Mammary epithelial cell (primary cell): ENCODE measurements at regions of chr12 and their contacts with region 1.

Region 1: DNA sequence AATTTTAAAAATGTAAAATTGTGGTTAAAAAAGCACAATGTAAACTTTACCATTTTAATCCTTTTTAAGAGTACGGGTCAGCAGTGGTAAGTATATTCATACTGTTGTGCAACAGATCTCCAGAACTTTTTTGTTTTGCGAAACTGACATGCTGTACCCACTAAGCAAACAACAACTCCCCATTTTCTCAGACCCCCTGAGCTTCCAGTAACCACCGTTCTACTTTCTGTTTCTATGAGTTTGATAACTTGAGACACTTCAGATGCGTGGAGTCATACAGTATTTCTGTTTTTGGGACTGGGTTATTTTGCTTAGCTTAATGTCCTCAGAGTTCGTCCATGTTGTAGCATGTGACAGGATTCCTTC is 38.0 kb downstream of the CHST11 start:
- DNase-seq: no peak
- H3K4me3 ChIP-seq: no peak overlapping the region
- H3K27ac ChIP-seq: no peak overlapping the region
- H3K4me1 ChIP-seq: no peaks in the 10 kb centered on the region
- H3K27me3 ChIP-seq: no peaks in the 10 kb centered on the region
- CTCF ChIP-seq: no peak

Region 2: GRCh38 chr12:104582739-104583138 is 88.0 kb after region 1 on chr12:
- CTCF ChIA-PET with region 1: no interaction called
- dilution Hi-C with region 1: loop called (anchors 5 kb)
- in situ Hi-C with region 1: no loop called
- intact Hi-C with region 1: no loop called
- DNase-seq: no peak
- H3K4me3 ChIP-seq: no peak overlapping the region
- H3K27ac ChIP-seq: no peak overlapping the region
- H3K4me1 ChIP-seq: peaks cover 20% of the 10 kb centered on the region
- H3K27me3 ChIP-seq: no peaks in the 10 kb centered on the region
- CTCF ChIP-seq: no peak

Region 3: DNA sequence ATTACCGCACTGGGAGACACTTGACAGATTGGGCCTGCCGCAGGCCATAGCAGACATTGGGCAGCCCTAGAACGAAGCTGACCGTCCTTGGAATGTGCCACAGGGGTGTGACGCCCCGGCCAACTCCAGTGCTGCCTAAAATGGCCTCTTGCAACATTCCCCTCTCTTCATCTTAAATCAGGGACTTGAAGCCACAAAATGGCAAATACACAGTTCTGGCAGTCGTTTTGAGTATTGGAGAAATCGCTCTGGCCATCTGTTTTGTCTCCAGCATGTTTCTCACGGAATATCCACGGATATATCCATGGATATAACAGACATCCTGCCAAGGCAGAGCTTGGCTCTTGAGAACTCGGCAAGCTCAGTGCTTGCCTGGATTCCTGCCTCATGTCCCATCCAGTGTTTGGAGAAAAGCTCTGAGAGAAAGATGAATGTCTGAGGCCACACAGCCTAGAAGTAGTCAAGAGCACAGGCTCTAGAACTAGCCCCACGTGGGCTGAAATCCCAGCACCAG is 120.3 kb after region 1 on chr12:
- CTCF ChIA-PET with region 1: no interaction called
- dilution Hi-C with region 1: no loop called
- in situ Hi-C with region 1: no loop called
- intact Hi-C with region 1: no loop called
- DNase-seq: no peak
- H3K4me3 ChIP-seq: no peak overlapping the region
- H3K27ac ChIP-seq: no peak overlapping the region
- H3K4me1 ChIP-seq: no peaks in the 10 kb centered on the region
- H3K27me3 ChIP-seq: no peaks in the 10 kb centered on the region
- CTCF ChIP-seq: no peak